ENCODE measurements at regions of chr9 and their contacts with region 1.

Region 1: DNA sequence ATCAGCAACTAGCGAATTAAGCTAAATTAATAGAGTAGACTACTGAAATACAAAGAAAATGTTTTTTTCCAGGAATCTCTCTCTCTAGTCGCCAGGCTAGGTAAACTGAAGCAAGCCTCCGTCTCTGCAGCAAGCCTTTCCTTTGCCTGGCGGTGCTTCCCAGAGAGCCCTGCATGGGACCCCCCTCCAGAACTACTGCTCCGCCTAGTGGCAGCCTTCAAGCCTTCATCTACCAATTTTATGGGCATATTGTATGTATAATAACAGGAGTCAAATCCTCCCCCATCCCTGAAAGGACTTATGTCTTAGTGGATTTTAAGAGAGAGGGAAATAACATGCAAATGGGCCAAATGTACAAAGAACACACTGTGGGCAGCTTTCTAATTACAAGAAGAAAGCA is 241.9 kb downstream of the SAXO1 start:
- DNase-seq: peak; percentile 39
- ATAC-seq: peak; percentile 91
- H3K4me3 ChIP-seq: no peak overlapping the region
- H3K27ac ChIP-seq: no peak overlapping the region
- H3K4me1 ChIP-seq: no peaks in the 10 kb centered on the region
- H3K27me3 ChIP-seq: no peaks in the 10 kb centered on the region; a peak in 1 of 5 replicates
- CTCF ChIP-seq: peak; percentile 60
- EP300 ChIP-seq: no peak
- POLR2A ChIP-seq: no peak
- RAD21 ChIP-seq: no peak

Region 2: GRCh38 chr9:18447131-18447530 is 343.9 kb before region 1 on chr9:
- CTCF ChIA-PET with region 1: no interaction called
- POLR2A ChIA-PET with region 1: no interaction called
- in situ Hi-C with region 1: no loop called
- intact Hi-C with region 1: no loop called
- DNase-seq: no peak
- ATAC-seq: no peak
- H3K4me3 ChIP-seq: no peak overlapping the region
- H3K27ac ChIP-seq: no peak overlapping the region
- H3K4me1 ChIP-seq: no peaks in the 10 kb centered on the region
- H3K27me3 ChIP-seq: no peaks in the 10 kb centered on the region
- CTCF ChIP-seq: no peak
- EP300 ChIP-seq: no peak
- POLR2A ChIP-seq: no peak
- RAD21 ChIP-seq: no peak

Region 3: GRCh38 chr9:19028835-19029451 is 237.9 kb after region 1 on chr9:
- CTCF ChIA-PET with region 1: no interaction called
- POLR2A ChIA-PET with region 1: no interaction called
- in situ Hi-C with region 1: no loop called
- intact Hi-C with region 1: loop called (anchors 10 kb)
- DNase-seq: peak; percentile 54
- ATAC-seq: peak; percentile 87
- H3K4me3 ChIP-seq: no peak overlapping the region
- H3K27ac ChIP-seq: no peak overlapping the region
- H3K4me1 ChIP-seq: no peaks in the 10 kb centered on the region
- H3K27me3 ChIP-seq: peaks cover 0 to 5% of the 10 kb centered on the region in 2 experiments; a peak in 1 of 5 replicates
- CTCF ChIP-seq: peak; percentile 77
- EP300 ChIP-seq: no peak
- POLR2A ChIP-seq: no peak
- RAD21 ChIP-seq: 0 out of 2 replicates have a peak, but pooled peaks have one; percentile 46

Measured in HepG2 (cell line).